ENCODE measurements at regions of chrX and their contacts with region 1.

Region 1: GRCh38 chrX:46903458-46904242 is 8.6 kb upstream of the JADE3 start:
- DNase-seq: peak; percentile 41 to 59
- H3K4me3 ChIP-seq: peak overlapping the region; percentile 51; the same call in 1 of the 2 replicates
- H3K27ac ChIP-seq: no peak overlapping the region
- H3K4me1 ChIP-seq: no peaks in the 10 kb centered on the region
- H3K27me3 ChIP-seq: no peaks in the 10 kb centered on the region
- CTCF ChIP-seq: peak; percentile 58

Region 2: DNA sequence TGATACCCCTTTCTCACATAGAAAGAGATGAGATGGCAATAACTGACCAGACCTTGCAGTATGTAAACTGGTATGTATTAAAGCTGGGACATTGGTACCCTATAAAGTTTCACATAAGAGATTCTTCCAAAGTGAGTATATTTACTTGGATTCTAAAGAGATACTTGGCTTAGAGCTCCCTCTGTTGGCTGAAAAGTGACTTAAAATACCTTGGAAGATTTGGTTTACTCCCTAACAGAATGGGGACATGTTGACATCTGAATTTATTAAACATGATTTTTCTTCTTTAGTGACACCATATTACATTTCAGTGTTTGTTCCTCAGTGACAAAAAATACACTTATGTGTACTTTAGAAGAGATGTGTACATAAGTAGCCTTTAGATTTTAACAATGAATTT is 126.7 kb after region 1 on chrX:
- CTCF ChIA-PET with region 1: no interaction called
- POLR2A ChIA-PET with region 1: no interaction called
- intact Hi-C with region 1: loop called (anchors 1 kb)
- DNase-seq: peak in 1 of 2 experiments; percentile 49
- H3K4me3 ChIP-seq: no peak overlapping the region
- H3K27ac ChIP-seq: no peak overlapping the region
- H3K4me1 ChIP-seq: no peaks in the 10 kb centered on the region
- H3K27me3 ChIP-seq: no peaks in the 10 kb centered on the region
- CTCF ChIP-seq: peak; percentile 61

Region 3: GRCh38 chrX:47093248-47093647 is 189.6 kb after region 1 on chrX:
- CTCF ChIA-PET with region 1: no interaction called
- POLR2A ChIA-PET with region 1: no interaction called
- intact Hi-C with region 1: loop called (anchors 5 kb)
- DNase-seq: no peak
- H3K4me3 ChIP-seq: no peak overlapping the region
- H3K27ac ChIP-seq: no peak overlapping the region
- H3K4me1 ChIP-seq: no peaks in the 10 kb centered on the region
- H3K27me3 ChIP-seq: no peaks in the 10 kb centered on the region
- CTCF ChIP-seq: peak; percentile 57